ENCODE measurements at regions of chr12 and their contacts with region 1.

Region 1: DNA sequence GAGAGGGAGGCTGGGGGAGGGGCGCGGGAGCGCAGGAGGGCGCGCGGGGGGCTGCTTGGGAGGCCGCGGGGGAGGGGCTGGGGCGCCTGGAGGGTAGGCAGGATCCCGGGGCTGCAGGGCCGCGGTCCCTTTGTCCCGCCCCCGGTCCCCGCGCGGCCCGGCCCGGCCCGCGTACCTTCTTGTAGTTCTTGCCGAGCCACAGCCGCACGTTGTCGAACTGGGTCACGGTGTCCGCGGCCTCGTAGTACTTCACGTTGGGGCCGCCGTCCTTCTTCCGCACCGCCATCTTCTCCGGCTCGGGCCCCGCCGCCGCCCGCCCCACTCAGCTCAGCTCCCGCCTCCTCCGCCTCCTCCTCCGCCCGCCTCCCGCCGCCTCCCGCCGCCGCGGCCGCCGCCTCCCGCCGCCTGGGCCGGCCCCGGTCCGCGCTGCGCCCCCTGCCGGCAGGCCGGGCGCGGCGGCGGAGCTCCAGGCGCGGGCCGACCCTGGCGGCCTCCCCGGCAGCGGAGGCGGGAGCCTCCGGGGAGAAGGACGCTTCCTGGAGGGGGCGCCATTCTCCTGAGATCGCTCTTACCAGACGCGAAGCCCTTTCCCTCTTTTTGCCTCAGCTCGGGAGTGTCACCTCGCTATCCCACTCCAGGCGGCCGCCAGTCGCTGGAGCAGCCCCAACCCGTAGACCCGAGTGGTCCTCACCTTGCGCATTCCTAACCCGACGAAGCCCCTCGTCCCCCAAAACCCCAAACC is at the start of gene SMARCC2:
- DNase-seq: peak; percentile 65
- H3K4me3 ChIP-seq: peak within 1 kb of the TSS; percentile 88
- H3K27ac ChIP-seq: peak within 1 kb of the TSS; percentile 83
- H3K27me3 ChIP-seq: no peaks in the 10 kb centered on the region
- CTCF ChIP-seq: peak; percentile 66
- polyA plus RNA-seq, gene SMARCC2: 90.2 and 101 TPM in 2 replicates

Region 2: DNA sequence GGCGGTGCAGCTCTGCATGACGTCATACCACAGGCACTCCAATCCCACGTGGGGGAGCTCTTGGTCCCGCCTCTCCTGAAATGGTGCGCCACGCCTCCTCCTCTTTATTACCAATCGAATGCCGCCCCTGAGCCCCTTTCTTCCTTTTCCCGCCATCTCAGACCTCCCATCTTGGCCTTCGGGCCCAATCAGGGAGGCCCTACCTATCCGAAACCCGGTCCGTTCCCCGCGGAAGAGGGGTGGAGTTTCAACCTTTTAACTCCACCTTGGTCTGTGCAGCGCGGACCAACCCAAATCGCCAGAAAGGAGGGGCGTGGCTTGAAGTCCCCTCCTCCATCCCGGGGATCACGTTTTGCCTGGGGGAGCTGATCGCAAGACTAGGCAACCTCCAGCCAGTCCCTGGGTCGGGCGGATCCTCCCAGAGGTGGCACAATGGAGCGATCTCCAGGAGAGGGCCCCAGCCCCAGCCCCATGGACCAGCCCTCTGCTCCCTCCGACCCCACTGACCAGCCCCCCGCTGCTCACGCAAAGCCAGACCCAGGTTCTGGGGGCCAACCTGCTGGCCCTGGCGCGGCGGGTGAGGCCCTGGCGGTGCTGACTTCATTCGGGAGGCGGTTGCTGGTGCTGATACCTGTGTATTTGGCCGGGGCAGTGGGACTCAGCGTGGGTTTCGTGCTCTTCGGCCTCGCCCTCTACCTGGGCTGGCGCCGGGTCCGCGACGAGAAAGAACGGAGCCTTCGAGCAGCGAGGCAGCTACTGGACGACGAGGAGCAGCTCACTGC is 61.3 kb before region 1 on chr12 and contains the start of gene ESYT1:
- CTCF ChIA-PET with region 1: interaction called, 51 read pairs
- POLR2A ChIA-PET with region 1: interaction called, 5 read pairs
- DNase-seq: peak; percentile 99
- H3K4me3 ChIP-seq: peak within 1 kb of the TSS; percentile 90
- H3K27ac ChIP-seq: peak within 1 kb of the TSS; percentile 78
- H3K27me3 ChIP-seq: no peaks in the 10 kb centered on the region
- CTCF ChIP-seq: no peak
- polyA plus RNA-seq, gene ESYT1: 127 and 140 TPM in 2 replicates

Region 3: GRCh38 chr12:56178347-56178746 is 11.0 kb before region 1 on chr12:
- CTCF ChIA-PET with region 1: interaction called, 15 read pairs
- POLR2A ChIA-PET with region 1: interaction called, 3 read pairs
- DNase-seq: no peak
- H3K4me3 ChIP-seq: no peak overlapping the region
- H3K27ac ChIP-seq: no peak overlapping the region
- H3K27me3 ChIP-seq: no peaks in the 10 kb centered on the region
- CTCF ChIP-seq: no peak

Region 4: GRCh38 chr12:56216461-56216860 is 27.1 kb after region 1 on chr12:
- CTCF ChIA-PET with region 1: interaction called, 73 read pairs
- POLR2A ChIA-PET with region 1: interaction called, 24 read pairs
- DNase-seq: no peak
- H3K4me3 ChIP-seq: no peak overlapping the region
- H3K27ac ChIP-seq: no peak overlapping the region
- H3K27me3 ChIP-seq: no peaks in the 10 kb centered on the region
- CTCF ChIP-seq: no peak

Region 5: DNA sequence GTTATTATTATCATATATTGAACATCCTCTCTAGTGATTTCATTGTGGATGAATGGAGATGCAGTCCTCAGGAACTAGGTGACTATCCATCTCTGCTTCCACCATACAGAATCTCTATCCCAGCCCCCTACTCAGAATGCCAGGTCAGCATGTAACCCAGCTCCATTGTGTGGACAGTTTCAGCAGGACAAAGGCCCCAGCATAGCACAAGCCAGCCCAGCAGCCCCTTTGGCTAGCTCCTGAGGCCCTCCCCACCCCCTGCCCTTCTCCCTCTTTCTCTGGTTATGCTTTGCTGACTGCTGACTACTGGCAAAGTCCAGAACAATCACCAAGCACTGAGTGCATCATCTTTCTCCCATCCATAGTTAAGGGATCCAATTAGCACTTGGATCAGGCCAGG is 273.2 kb after region 1 on chr12:
- CTCF ChIA-PET with region 1: interaction called, 12 read pairs
- POLR2A ChIA-PET with region 1: no interaction called
- DNase-seq: no peak
- H3K4me3 ChIP-seq: no peak overlapping the region
- H3K27ac ChIP-seq: no peak overlapping the region
- H3K27me3 ChIP-seq: no peaks in the 10 kb centered on the region
- CTCF ChIP-seq: no peak

Measured in AG04450 (cell line).